Activated CD4-positive, alpha-beta memory T cell treated with anti-CD3 and anti-CD28 coated beads, Interleukin-2, amount 10 ng/mL, durations not matched to agents 7 days and 5 days (primary cell): ENCODE measurements at regions of chr18 and their contacts with region 1.

Region 1: DNA sequence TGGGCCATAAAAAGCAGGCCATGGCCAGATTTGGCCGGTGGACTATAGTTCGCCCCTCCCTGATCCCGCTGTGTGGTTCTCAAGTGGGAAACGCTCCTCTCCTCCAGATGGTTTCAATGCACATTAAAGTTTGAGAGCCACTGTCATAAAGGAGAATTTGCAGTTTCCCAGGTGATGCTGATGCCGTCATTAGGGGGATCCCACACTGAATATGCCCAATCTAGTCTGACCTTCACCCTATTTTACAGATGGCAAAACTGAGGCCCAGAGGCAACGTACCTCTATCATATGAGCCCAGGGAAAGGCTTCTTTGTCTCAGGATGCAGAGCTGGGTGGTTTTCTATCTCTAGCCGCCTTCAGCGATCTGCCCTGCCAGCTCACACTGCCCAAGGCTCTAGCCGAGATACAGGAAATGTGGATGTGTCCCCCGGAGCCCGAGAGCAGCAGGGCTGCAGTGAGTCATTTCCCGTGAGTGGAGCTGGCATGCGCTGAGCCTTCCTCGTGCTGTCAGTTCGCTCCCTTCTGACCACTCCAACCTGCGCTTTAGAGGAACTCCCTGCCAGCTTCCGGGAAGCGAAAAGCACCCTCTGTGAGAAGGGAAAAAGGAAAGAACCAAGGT is 116.2 kb downstream of the SMAD7 start:
- DNase-seq: peak; percentile 86
- H3K4me3 Mint-ChIP-seq: peak overlapping the region; percentile 81
- H3K27ac Mint-ChIP-seq: peak overlapping the region; percentile 97
- H3K4me1 Mint-ChIP-seq: peaks cover 93% of the 10 kb centered on the region
- H3K27me3 Mint-ChIP-seq: no peaks in the 10 kb centered on the region

Region 2: GRCh38 chr18:48820483-48821250 is 13.9 kb before region 1 on chr18:
- CTCF ChIA-PET with region 1: interaction called, 3 read pairs
- POLR2A ChIA-PET with region 1: interaction called, 75 read pairs
- DNase-seq: no peak
- H3K4me3 Mint-ChIP-seq: no peak overlapping the region
- H3K27ac Mint-ChIP-seq: peak overlapping the region; percentile 13
- H3K4me1 Mint-ChIP-seq: peaks cover 41% of the 10 kb centered on the region
- H3K27me3 Mint-ChIP-seq: no peaks in the 10 kb centered on the region

Region 3: GRCh38 chr18:48855422-48856377 is 21.2 kb after region 1 on chr18:
- CTCF ChIA-PET with region 1: no interaction called
- POLR2A ChIA-PET with region 1: interaction called, 13 read pairs
- DNase-seq: peak; percentile 61
- H3K4me3 Mint-ChIP-seq: no peak overlapping the region
- H3K27ac Mint-ChIP-seq: peak overlapping the region; percentile 61
- H3K4me1 Mint-ChIP-seq: peaks cover 57% of the 10 kb centered on the region
- H3K27me3 Mint-ChIP-seq: no peaks in the 10 kb centered on the region

Region 4: GRCh38 chr18:48868468-48869466 is 34.2 kb after region 1 on chr18:
- CTCF ChIA-PET with region 1: interaction called, 8 read pairs
- POLR2A ChIA-PET with region 1: interaction called, 37 read pairs
- DNase-seq: peak; percentile 76
- H3K4me3 Mint-ChIP-seq: peak overlapping the region; percentile 16
- H3K27ac Mint-ChIP-seq: peak overlapping the region; percentile 99
- H3K4me1 Mint-ChIP-seq: peaks cover 41% of the 10 kb centered on the region
- H3K27me3 Mint-ChIP-seq: no peaks in the 10 kb centered on the region

Region 5: GRCh38 chr18:48928787-48929186 is 94.3 kb after region 1 on chr18:
- CTCF ChIA-PET with region 1: no interaction called
- POLR2A ChIA-PET with region 1: interaction called, 12 read pairs
- DNase-seq: peak; percentile 84
- H3K4me3 Mint-ChIP-seq: peak overlapping the region; percentile 60
- H3K27ac Mint-ChIP-seq: peak overlapping the region; percentile 84
- H3K4me1 Mint-ChIP-seq: peaks cover 98% of the 10 kb centered on the region
- H3K27me3 Mint-ChIP-seq: no peaks in the 10 kb centered on the region

Region 6: GRCh38 chr18:48951448-48952286 is 117.1 kb after region 1 on chr18:
- CTCF ChIA-PET with region 1: interaction called, 4 read pairs
- POLR2A ChIA-PET with region 1: interaction called, 20 read pairs
- DNase-seq: peak; percentile 83
- H3K4me3 Mint-ChIP-seq: peak overlapping the region; percentile 81
- H3K27ac Mint-ChIP-seq: peak overlapping the region; percentile 76
- H3K4me1 Mint-ChIP-seq: peaks cover 47% of the 10 kb centered on the region
- H3K27me3 Mint-ChIP-seq: no peaks in the 10 kb centered on the region